ENCODE measurements at regions of chr18 and their contacts with region 1.

Region 1: GRCh38 chr18:3665780-3666525 is 216.0 kb downstream of the TGIF1 start:
- DNase-seq: peak; percentile 45
- H3K4me3 ChIP-seq: peak overlapping the region; percentile 15; the same call in 1 of the 2 replicates
- CTCF ChIP-seq: peak; percentile 86

Region 2: GRCh38 chr18:3281456-3282400 is 384.2 kb before region 1 on chr18:
- CTCF ChIA-PET with region 1: interaction called, 137 read pairs
- POLR2A ChIA-PET with region 1: interaction called, 14 read pairs
- DNase-seq: no peak
- H3K4me3 ChIP-seq: no peak overlapping the region
- CTCF ChIP-seq: peak; percentile 31

Region 3: DNA sequence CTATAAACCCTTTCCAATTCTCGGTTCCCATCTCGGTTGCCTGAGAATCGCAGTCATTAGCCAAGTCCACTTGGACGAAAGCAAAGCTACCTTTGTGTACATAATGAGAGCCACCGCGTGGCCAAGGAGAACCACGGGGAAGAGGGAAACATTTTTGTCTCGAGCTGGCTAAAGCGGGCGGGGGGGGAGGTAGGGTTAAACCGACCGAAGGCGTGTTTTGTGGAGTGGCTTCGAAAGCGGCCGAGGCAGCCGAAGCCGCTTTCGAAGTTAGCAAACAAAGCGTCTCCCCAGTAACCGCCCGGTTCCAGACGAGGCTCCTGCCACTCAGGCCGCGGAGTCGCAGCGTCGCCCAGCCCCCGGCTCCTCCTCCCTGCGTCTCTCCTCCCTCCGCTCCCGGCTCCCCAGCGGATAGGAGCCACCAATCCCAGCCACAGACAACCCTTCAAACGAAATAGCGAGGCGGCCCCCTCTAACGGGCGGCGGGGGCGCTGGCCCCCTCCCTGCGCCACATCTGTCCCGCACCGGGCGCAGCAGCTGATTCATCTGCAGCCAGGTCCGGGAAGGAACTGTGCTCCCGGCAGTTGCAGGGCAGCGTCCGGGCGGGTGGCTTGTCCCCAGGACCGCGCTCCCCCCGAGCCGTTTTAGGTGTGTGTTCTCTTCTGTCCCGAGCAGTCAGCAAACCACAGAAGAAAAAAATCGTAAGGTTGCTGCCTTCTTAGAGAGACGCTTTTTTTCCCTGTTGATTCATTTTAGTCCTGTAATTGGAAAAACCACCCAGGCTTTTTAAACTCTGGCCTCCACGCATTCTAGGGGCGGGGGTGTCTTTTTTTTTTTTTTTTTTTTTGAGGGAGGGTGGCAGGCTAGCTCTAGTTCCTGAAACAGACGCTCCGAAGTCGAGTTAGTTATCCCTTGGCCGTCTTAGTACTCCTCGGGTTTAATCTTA is 217.8 kb before region 1 on chr18:
- CTCF ChIA-PET with region 1: interaction called, 82 read pairs
- POLR2A ChIA-PET with region 1: interaction called, 8 read pairs
- DNase-seq: no peak
- H3K4me3 ChIP-seq: peak overlapping the region; percentile 81
- CTCF ChIP-seq: peak; percentile 26

Region 4: DNA sequence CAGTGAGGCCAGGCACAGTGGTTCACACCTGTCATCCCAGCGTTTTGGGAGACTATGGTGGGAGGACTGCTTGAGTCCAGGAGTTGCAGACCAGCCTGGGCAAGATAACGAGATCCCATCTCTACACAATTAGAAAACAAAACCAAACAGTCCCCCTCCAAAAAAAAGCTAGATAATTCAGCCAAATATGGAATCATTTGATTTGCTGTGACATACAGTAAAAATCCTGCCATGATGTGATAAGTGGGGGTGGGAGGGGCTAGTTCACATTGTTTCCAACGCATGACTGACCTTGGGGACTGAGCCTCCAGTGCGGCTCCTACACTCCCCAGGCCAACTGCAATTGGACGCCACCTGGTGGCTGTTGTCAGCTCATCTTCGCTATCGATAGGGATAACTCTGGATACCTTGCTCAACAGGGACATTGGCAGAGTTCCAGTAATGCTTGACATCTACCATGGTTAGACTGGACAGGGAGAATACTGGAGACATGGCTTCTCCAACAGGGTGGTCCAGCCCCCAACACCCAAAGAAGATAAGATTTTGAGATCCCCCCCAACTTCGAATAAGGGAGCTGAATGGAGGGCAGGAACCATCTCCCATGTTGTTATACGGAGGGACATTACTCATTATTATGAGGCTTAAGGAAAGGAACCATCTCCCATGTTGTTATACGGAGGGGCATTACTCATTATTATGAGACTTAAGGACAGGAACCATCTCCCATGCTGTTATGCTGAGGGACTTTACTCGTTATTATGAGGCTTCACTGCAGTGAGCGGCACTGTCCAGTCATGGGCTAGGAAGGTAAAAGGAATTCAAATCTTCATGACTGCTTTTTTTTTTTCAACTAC is 80.1 kb before region 1 on chr18:
- CTCF ChIA-PET with region 1: interaction called, 102 read pairs
- POLR2A ChIA-PET with region 1: no interaction called
- DNase-seq: no peak
- H3K4me3 ChIP-seq: no peak overlapping the region
- CTCF ChIP-seq: peak; percentile 80

Region 5: GRCh38 chr18:3612315-3612714 is 53.6 kb before region 1 on chr18:
- CTCF ChIA-PET with region 1: interaction called, 22 read pairs
- POLR2A ChIA-PET with region 1: no interaction called
- DNase-seq: no peak
- H3K4me3 ChIP-seq: no peak overlapping the region
- CTCF ChIP-seq: no peak

Region 6: GRCh38 chr18:3652380-3653262 is 13.3 kb before region 1 on chr18:
- CTCF ChIA-PET with region 1: interaction called, 29 read pairs
- POLR2A ChIA-PET with region 1: interaction called, 4 read pairs
- DNase-seq: peak; percentile 79
- H3K4me3 ChIP-seq: no peak overlapping the region
- CTCF ChIP-seq: no peak